Activated T-helper 2 cell treated with anti-CD3 and anti-CD28 coated beads, Interferon-gamma antibody, Interleukin-2, Interleukin-4, amounts not matched to agents 10 μg/mL and 5 μg/mL and 100 μg/mL, durations not matched to agents 14 hours and 24 hours and 36 hours (primary cell): ENCODE measurements at regions of chr12 and their contacts with region 1.

Region 1: DNA sequence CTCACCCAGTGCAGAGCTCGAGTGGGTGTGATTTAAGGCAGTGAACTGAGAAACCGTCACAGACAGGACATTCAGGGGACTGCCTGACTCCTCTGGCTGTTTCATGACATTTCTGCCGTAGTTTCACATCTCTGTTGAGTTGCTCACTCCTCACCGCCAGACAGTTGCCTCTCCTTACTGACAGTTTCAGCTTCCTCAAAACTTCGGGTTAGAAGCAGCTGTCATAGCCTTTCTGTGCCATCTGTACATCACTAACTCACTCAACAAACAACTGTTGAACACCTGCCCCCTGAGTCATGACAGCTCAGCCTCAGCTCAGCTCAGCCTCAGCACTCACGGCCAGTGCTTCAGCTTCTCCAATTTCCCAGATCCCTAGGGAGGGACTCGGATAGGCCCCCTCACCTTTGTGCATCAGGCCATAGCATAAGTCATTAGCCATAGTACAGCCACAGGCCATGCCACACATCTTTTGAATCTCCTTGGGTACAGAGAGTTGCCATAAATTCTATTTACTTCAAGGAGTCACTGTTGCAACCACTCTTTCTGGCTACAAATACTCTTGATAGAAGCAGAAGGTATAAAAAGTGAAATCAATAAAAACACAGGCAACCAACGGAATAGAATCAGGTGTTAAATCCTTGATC is 6.2 kb upstream of the SLC15A4 start:
- DNase-seq: peak; percentile 31
- H3K4me3 Mint-ChIP-seq: peak overlapping the region; percentile 19
- H3K27ac Mint-ChIP-seq: peak overlapping the region; percentile 90
- H3K4me1 Mint-ChIP-seq: peaks cover 22% of the 10 kb centered on the region
- H3K27me3 Mint-ChIP-seq: no peaks in the 10 kb centered on the region

Region 2: GRCh38 chr12:128810182-128811127 is 19.5 kb before region 1 on chr12:
- intact Hi-C with region 1: loop called (anchors 2 kb)
- DNase-seq: peak; percentile 41
- H3K4me3 Mint-ChIP-seq: peak overlapping the region; percentile 62
- H3K27ac Mint-ChIP-seq: peak overlapping the region; percentile 82
- H3K4me1 Mint-ChIP-seq: peaks cover 51% of the 10 kb centered on the region
- H3K27me3 Mint-ChIP-seq: no peaks in the 10 kb centered on the region

Region 3: GRCh38 chr12:129016159-129016558 is 186.2 kb after region 1 on chr12:
- intact Hi-C with region 1: no loop called
- DNase-seq: no peak
- H3K4me3 Mint-ChIP-seq: no peak overlapping the region
- H3K27ac Mint-ChIP-seq: no peak overlapping the region
- H3K4me1 Mint-ChIP-seq: no peaks in the 10 kb centered on the region
- H3K27me3 Mint-ChIP-seq: no peaks in the 10 kb centered on the region